A673 (cell line): ENCODE measurements at regions of chr1 and their contacts with region 1.

Region 1: GRCh38 chr1:174289644-174290310 is 130.5 kb downstream of the RABGAP1L start:
- DNase-seq: no peak
- H3K4me3 ChIP-seq: no peak overlapping the region
- H3K27ac ChIP-seq: no peak overlapping the region
- H3K4me1 ChIP-seq: peaks cover 3% of the 10 kb centered on the region
- H3K27me3 ChIP-seq: no peaks in the 10 kb centered on the region
- CTCF ChIP-seq: no peak

Region 2: GRCh38 chr1:174276087-174276486 is 13.7 kb before region 1 on chr1:
- CTCF ChIA-PET with region 1: no interaction called
- POLR2A ChIA-PET with region 1: no interaction called
- intact Hi-C with region 1: no loop called
- DNase-seq: no peak
- H3K4me3 ChIP-seq: no peak overlapping the region
- H3K27ac ChIP-seq: no peak overlapping the region
- H3K4me1 ChIP-seq: peaks cover 5% of the 10 kb centered on the region
- H3K27me3 ChIP-seq: no peaks in the 10 kb centered on the region
- CTCF ChIP-seq: no peak

Region 3: GRCh38 chr1:174580801-174581200 is 291.0 kb after region 1 on chr1:
- CTCF ChIA-PET with region 1: no interaction called
- POLR2A ChIA-PET with region 1: interaction called, 13 read pairs
- intact Hi-C with region 1: no loop called
- DNase-seq: no peak
- H3K4me3 ChIP-seq: no peak overlapping the region
- H3K27ac ChIP-seq: no peak overlapping the region
- H3K4me1 ChIP-seq: no peaks in the 10 kb centered on the region
- H3K27me3 ChIP-seq: no peaks in the 10 kb centered on the region
- CTCF ChIP-seq: no peak